ENCODE measurements at regions of chr17 and their contacts with region 1.

Region 1: DNA sequence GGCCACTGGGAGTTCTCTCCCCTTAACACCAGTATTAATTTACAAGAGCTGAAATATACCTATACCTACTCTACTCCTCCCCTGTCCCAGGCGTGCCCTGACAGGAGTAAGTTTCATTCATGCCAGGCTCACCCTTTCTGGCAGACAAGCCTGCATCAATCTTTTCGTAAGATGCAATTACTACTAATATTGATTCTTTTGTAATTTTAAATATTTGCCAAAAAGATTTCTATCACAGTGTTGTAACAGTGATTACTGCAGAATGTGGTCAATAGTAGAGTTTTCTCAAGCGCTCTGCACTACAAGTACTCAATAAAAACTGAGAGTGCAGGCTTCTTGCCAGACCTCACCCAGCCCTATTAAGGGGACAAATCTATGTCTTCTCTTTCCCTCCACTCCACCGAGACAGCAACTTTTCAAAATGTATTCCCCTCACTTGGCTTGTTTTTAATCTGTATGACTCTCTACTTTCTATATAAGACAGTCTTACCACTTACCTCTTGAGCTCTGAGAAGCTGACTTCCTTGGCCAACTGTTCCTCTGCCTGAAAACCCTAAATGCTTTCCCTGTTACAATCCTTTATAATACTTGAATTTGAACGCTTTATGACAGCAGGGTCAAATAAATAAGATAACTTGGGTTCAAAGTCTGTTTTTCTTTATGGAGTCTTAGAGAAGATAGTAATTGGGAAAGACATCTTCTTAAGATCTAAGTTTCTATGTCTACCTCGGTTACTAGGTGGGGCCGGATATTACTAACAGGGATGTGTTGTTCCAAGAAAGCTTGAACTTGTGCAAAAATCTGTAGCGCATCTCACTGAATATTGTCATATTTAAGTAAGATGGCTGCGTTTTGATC is at the start of gene TMIGD1:
- DNase-seq: no peak
- total RNA-seq, gene TMIGD1: not detected

Region 2: GRCh38 chr17:30300818-30301217 is 32.9 kb before region 1 on chr17:
- intact Hi-C with region 1: loop called in 1 of 2 experiments (anchors 1 kb)
- DNase-seq: no peak